Left cardiac atrium (tissue), 4 donors: ENCODE measurements at regions of chr3 and their contacts with region 1.

Region 1: DNA sequence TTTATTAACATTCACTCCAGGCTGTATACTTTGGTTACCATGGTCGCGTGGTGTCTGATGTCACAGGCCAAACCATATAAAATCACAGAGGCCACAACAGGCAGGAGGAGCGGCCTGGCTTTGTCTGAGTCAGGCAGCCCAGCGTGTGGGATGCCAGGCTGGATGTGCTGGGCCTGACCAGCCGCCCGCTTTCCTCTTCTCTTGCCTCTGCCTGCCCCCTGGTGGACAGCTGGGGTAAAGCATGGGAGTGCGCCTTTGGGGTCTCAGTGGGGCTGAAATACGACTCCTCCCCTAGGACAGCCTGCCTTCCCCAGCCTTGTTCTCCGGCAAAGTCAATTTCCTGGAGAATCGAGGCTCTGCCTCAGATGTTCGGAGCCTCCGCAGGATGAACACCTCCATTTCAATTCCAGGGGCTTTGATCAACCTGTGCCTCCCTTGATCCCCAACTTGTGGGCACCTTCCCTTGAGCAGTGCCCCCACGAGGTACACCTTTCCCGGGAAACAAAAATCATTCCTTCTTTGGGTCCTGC is 78.2 kb downstream of the CCNL1 start:
- DNase-seq: peak; percentile 93
- ATAC-seq: peak; percentile 81 to 93

Region 2: DNA sequence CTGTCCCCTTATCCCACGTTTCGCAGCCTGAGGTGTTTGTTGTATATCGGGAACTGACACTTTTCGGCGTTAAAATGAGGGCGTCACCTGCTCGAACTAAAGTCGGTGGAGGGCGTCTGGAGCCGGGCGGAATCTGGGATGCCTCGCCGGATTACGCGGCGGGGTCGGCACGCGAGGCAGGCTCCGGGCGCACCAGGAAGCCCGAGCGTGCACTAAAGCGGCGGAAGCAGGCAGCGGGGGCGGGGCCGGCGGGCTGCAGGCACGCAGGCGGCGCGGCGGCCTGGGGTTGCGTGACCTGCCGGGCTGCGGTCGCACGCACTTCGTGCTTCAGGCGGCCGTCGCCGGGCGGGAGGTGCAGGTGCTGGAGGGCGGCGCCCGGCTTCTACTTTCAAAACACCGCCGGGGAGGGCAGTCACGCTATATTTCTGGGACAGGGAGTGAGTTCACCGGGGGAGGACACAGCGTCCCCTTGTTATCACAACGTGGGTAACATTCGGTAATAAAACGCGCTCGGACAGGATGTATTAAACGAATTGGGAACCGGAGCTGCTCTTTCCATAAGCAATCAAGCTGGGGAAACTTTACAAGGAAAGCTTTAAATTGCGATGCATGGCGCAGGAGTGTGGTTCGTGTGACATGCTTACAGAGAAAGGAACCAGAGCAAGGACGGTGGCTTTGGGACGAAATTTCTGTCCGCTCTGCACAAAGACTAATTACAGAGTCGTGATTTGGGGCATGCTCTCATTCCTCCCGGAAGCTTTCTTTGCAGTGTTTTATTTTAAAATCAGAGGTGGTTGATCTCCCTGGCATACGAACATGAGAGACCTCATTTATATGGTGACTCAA is 264.7 kb before region 1 on chr3:
- intact Hi-C with region 1: loop called in 1 of 2 experiments (anchors 5 kb)
- DNase-seq: peak; percentile 90
- ATAC-seq: peak; percentile 95 to 97

Region 3: GRCh38 chr3:157001221-157001957 is 80.4 kb before region 1 on chr3:
- intact Hi-C with region 1: no loop called
- DNase-seq: no peak
- ATAC-seq: peak in 1 of 2 donors; percentile 68